GM12878 (cell line): ENCODE measurements at regions of chr14 and their contacts with region 1.

Region 1: GRCh38 chr14:69392481-69392880 is 5.6 kb downstream of the ERH start:
- DNase-seq: peak; percentile 44
- ATAC-seq: peak; percentile 72
- H3K4me3 ChIP-seq: peak overlapping the region; percentile 63; the same call in 1 of the 2 replicates
- H3K27ac ChIP-seq: peak overlapping the region; percentile 65
- H3K4me1 ChIP-seq: peaks cover 29% of the 10 kb centered on the region
- H3K27me3 ChIP-seq: no peaks in the 10 kb centered on the region
- CTCF ChIP-seq: no peak
- EP300 ChIP-seq: peak; percentile 20 to 60; a peak in 2 of 4 replicates
- POLR2A ChIP-seq: no peak
- RAD21 ChIP-seq: no peak

Region 2: DNA sequence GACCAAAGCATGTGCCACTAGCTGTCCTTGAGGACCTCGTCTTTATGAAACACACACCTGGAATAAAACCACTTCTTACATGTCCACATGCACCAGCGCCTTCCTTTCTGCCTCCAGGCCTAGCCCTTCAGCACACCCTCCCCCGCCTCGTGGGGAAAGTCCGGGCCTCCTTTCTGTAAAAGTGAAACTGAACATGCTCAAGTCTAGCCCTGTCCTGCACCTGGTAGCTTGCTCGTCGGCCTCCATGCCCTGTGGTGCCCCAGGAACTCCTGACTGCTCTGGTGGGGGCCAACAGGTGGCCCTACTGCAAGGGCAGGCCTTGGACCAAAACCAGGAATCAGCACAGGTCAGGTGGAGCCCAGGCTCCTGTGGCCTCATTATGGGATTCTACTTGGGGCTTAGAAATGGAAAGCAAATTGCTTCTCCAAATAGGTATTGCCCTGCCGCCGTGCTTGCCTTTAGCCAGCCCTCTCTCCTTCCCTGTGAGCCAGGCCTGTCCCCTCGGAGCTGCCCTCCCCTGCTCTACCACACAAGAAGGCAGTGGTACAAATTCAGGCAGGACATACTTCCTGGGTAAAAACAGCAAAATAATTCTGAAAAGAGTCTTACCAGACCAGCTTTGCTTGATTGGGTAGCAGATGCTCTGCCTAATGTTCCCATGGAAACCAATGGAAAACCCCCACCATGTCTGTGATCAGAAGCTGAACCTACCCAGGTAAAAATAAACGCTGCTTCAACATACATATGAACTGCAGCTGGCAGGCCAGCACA is 37.9 kb before region 1 on chr14:
- CTCF ChIA-PET with region 1: interaction called, 11 read pairs
- POLR2A ChIA-PET with region 1: interaction called, 100 read pairs
- RAD21 ChIA-PET with region 1: interaction called, 143 read pairs
- SMC1A ChIA-PET with region 1: interaction called, 24 read pairs
- in situ Hi-C with region 1: no loop called
- intact Hi-C with region 1: loop called (anchors 2 kb)
- DNase-seq: peak; percentile 87
- ATAC-seq: peak; percentile 90
- H3K4me3 ChIP-seq: peak overlapping the region; percentile 48; the same call in 1 of the 2 replicates
- H3K27ac ChIP-seq: peak overlapping the region; percentile 99
- H3K4me1 ChIP-seq: peaks cover 56% of the 10 kb centered on the region
- H3K27me3 ChIP-seq: no peaks in the 10 kb centered on the region
- CTCF ChIP-seq: no peak
- EP300 ChIP-seq: peak; percentile 28 to 58; a peak in 2 of 4 replicates
- POLR2A ChIP-seq: peak; percentile 78
- RAD21 ChIP-seq: no peak; the same call in 1 of the 2 replicates